ENCODE measurements at regions of chr3 and their contacts with region 1.

Region 1: GRCh38 chr3:188941103-188941502 is 230.7 kb upstream of the TPRG1 start:
- DNase-seq: no peak
- H3K4me3 ChIP-seq: no peak overlapping the region
- H3K27ac ChIP-seq: peak overlapping the region in 3 of 4 donors; percentile 24 to 51 (median 34)
- H3K4me1 ChIP-seq: peaks cover 12 to 34% (median 20%) of the 10 kb centered on the region in 4 donors
- H3K27me3 ChIP-seq: no peaks in the 10 kb centered on the region
- CTCF ChIP-seq: no peak
- EP300 ChIP-seq: no peak
- POLR2A ChIP-seq: no peak

Region 2: GRCh38 chr3:188904670-188905069 is 36.4 kb before region 1 on chr3:
- intact Hi-C with region 1: loop called (anchors 5 kb)
- DNase-seq: no peak
- H3K4me3 ChIP-seq: no peak overlapping the region
- H3K27ac ChIP-seq: no peak overlapping the region
- H3K4me1 ChIP-seq: peaks cover 8 to 35% (median 32%) of the 10 kb centered on the region in 4 donors
- H3K27me3 ChIP-seq: no peaks in the 10 kb centered on the region
- CTCF ChIP-seq: no peak
- EP300 ChIP-seq: no peak
- POLR2A ChIP-seq: no peak